Dorsolateral prefrontal cortex (tissue), 120 donors: ENCODE measurements at regions of chr1 and their contacts with region 1.

Region 1: GRCh38 chr1:69567652-69568420 is at the start of gene LRRC7:
- DNase-seq: peak in 9 of 10 donors; percentile 35 to 72 (median 53)
- H3K4me3 ChIP-seq: peak within 1 kb of the TSS; percentile 50 to 89 (median 77)
- H3K27ac ChIP-seq: peak within 1 kb of the TSS; percentile 79 to 97 (median 93)
- H3K27me3 ChIP-seq: peaks cover 0 to 7% (median 0%) of the 10 kb centered on the region in 45 donors
- CTCF ChIP-seq: peak in 9 of 56 donors; percentile 7 to 27 (median 12)
- total RNA-seq, gene LRRC7: 71.3 to 205 (median 145) TPM

Region 2: DNA sequence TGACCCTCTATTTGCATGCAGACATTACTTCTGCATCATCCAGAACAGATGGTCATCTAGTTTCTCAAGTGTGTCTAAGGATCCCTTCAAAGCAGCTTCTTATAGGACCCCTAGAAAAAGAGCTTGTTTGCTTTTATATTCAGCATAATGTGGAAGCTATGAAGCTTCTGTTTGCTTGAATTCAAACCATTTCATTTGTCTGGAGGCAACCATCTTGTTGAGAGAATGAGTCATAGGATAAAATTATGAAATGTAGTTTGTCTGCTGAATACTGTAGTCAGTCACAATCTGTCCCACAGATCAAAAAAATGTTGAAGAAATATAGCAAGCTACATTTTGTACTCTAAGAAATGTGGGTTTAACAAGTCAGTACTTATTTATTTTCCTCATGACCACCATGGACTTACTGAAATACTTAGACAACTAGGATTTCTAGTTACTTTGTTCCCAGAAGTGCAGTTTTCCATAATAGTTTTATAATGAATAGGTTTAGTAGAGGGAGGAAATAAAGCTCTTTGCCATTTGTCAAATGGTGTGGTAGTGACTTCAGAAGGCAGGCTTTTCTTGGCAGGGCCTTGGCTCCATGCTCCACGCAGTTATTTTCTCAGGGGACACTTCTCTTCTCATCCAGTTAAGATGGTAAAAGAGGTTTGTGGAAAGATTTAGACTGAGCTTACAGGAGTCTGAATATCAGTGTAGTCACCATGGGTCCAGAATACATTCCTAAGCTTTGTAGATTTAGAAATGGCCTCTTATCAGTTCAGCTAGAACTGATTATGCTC is 996.2 kb before region 1 on chr1:
- intact Hi-C with region 1: loop called in 1 of 2 experiments (anchors 5 kb)
- DNase-seq: no peak
- H3K4me3 ChIP-seq: no peak overlapping the region
- H3K27ac ChIP-seq: peak overlapping the region in 57 of 59 donors; percentile 12 to 91 (median 71)
- H3K27me3 ChIP-seq: peaks cover 0 to 2% (median 0%) of the 10 kb centered on the region in 45 donors
- CTCF ChIP-seq: no peak

Region 3: GRCh38 chr1:69109277-69109676 is 458.6 kb before region 1 on chr1:
- intact Hi-C with region 1: loop called (anchors 5 to 10 kb)
- DNase-seq: peak in 2 of 10 donors; percentile 25 to 40
- H3K4me3 ChIP-seq: no peak overlapping the region
- H3K27ac ChIP-seq: no peak overlapping the region
- H3K27me3 ChIP-seq: no peaks in the 10 kb centered on the region
- CTCF ChIP-seq: no peak

Region 4: GRCh38 chr1:69551476-69552324 is 16.1 kb before region 1 on chr1:
- intact Hi-C with region 1: no loop called
- DNase-seq: no peak
- H3K4me3 ChIP-seq: no peak overlapping the region
- H3K27ac ChIP-seq: no peak overlapping the region
- H3K27me3 ChIP-seq: no peaks in the 10 kb centered on the region
- CTCF ChIP-seq: no peak

Region 5: GRCh38 chr1:69661686-69662085 is 93.8 kb after region 1 on chr1:
- intact Hi-C with region 1: loop called in 1 of 2 experiments (anchors 5 kb)
- DNase-seq: no peak
- H3K4me3 ChIP-seq: peak overlapping the region in 10 of 59 donors; percentile 7 to 43 (median 22)
- H3K27ac ChIP-seq: peak overlapping the region in 58 of 59 donors; percentile 2 to 95 (median 84)
- H3K27me3 ChIP-seq: no peaks in the 10 kb centered on the region
- CTCF ChIP-seq: no peak

Region 6: DNA sequence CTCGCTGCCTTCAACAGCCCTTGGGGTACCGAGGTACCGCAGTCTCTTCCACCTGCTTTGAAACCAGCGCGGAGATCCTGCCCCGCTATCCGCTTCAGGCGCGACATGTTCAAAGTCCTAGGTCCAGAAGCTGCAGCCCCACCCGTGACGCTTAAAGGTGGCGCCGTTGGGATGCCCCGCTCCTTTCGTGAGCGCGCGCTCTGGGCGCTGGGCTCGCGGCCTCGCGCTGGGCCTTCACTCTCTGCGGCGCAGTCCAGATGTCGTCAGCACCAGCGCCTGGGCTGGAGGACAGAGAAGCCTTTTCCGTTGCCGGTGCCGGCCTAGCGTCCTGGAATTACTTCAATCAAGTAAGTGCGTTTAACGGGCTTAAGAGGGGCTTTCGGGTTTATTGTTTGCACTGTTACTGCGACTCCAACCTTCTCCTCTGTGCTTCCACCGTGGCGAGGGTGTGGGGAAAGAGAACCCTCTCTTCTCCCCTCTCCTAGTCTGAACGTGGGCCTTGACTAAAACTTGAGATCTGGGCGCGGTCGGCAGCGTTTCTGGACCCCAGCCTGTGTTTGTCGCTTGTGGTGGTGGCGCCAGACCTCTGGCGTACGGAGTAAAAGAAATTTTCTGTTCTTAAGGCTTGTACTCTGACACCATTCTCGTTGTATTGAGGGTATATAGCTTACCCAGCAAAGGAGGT is 637.7 kb after region 1 on chr1 and contains the start of gene LRRC40:
- intact Hi-C with region 1: loop called in 1 of 2 experiments (anchors 10 kb)
- DNase-seq: peak; percentile 93 to 98 (median 96)
- H3K4me3 ChIP-seq: peak within 1 kb of the TSS; percentile 62 to 99 (median 90)
- H3K27ac ChIP-seq: peak within 1 kb of the TSS; percentile 44 to 95 (median 85)
- H3K27me3 ChIP-seq: no peaks in the 10 kb centered on the region
- CTCF ChIP-seq: peak in 44 of 56 donors; percentile 6 to 64 (median 36)
- total RNA-seq, gene LRRC40: 7.4 to 28.2 (median 19.2) TPM